ENCODE measurements at regions of chr3 and their contacts with region 1.

Region 1: DNA sequence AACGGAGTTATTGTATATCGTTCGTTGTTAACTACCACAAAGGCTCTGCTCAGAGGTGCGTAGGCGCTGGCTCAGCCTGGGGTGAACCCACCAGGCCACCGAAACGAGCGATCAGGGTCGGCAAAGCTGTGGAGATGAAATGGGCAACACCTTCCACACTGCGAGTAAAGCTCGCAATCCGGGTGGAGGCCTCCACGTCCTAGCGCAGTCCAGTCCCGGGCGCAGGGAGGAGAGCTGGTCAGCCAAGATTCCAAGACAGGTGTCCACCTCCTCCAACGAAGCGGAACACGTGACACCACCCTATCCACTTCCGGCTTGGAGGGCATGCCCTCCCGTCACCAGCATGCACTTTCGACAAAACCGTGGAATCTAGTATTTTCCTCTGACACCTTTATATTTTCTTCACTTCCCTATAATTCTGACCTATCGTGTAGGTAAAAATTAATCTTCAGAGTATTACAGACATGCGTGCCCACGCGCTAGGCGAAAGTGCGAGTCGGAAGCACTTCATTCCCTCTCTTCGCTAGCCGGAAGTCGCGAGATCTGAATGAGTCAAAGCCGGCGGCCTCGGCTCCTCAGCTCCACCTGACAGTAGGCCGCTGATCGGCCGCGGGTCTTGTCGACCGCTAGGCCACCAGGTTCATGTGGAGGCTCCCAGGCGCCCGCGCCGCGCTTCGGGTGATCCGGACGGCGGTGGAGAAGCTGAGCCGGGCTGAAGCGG is at the start of gene PDE12:
- H3K4me3 ChIP-seq: peak within 1 kb of the TSS; percentile 96
- H3K27ac ChIP-seq: peak within 1 kb of the TSS; percentile 61
- H3K4me1 ChIP-seq: no peaks in the 10 kb centered on the region
- CTCF ChIP-seq: no peak; the same call in 1 of the 2 replicates

Region 2: DNA sequence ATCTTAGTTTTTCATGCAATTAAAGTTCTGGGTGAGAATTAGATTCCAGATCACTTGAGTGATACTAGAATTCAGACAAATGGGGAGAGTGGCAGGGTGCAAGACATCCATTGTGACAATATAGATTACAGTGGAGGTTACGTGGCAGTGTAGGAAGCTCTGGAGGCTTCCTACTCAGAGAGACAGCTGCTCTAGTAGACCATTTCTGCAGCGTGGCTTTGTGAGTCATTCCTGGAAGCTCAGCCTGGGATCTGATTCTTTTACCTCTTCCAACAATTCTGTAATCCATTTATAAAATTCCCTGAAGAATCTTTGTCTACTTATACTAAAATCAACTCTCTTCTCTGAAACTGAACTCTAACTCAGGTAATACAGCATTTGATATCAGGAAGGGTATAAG is 173.0 kb before region 1 on chr3:
- CTCF ChIA-PET with region 1: no interaction called
- POLR2A ChIA-PET with region 1: no interaction called
- H3K4me3 ChIP-seq: no peak overlapping the region
- H3K27ac ChIP-seq: no peak overlapping the region
- H3K4me1 ChIP-seq: no peaks in the 10 kb centered on the region
- CTCF ChIP-seq: no peak

Region 3: GRCh38 chr3:57597122-57597923 is 41.4 kb after region 1 on chr3 and contains the start of gene ARF4:
- CTCF ChIA-PET with region 1: no interaction called
- POLR2A ChIA-PET with region 1: interaction called, 11 read pairs
- H3K4me3 ChIP-seq: peak within 1 kb of the TSS; percentile 86
- H3K27ac ChIP-seq: peak within 1 kb of the TSS; percentile 75
- H3K4me1 ChIP-seq: no peaks in the 10 kb centered on the region
- CTCF ChIP-seq: peak; percentile 81